ENCODE measurements at regions of chr10 and their contacts with region 1.

Region 1: DNA sequence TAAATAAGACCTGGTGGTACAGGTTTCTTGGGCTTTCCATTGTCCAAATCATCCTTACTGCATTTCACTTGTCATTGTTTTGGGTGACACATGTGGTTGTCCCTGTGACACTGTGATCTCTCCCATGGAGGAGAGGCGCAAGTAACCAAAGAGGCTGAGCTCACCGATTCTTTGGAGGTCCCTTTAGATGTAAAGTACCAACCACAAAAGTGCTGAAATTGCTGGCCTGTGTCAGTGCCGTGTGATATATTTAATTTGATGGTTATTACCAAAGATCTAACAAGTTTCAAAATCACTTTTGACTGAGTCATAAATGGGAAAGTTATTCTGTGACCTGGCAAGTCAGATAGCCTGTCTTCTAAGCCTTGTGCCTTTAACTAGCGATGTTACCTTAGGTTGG is 19.4 kb downstream of the MCM10 start:
- DNase-seq: no peak
- CTCF ChIP-seq: no peak

Region 2: GRCh38 chr10:13168781-13169180 is 12.0 kb before region 1 on chr10:
- CTCF ChIA-PET with region 1: interaction called, 10 read pairs
- POLR2A ChIA-PET with region 1: no interaction called
- DNase-seq: no peak
- CTCF ChIP-seq: no peak

Region 3: DNA sequence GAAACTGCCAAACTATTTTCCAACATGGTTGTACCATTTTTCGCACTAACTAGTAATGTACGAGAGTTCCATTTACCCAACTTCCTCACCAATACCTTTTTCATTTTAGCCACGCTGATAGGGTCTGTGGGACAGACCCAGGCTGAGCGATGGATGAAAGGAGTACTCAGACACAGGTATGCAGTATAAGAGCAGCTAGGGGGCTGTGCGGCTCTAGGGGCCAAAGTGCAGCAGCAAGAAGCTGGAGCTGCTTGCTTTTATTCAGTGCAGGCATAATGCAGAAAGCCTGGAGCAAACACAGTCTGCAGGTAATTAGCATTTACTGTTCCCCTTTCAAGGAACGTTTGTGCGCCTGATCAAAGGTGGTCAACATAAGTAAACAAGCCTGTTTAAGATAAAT is 32.4 kb after region 1 on chr10:
- CTCF ChIA-PET with region 1: no interaction called
- POLR2A ChIA-PET with region 1: no interaction called
- DNase-seq: no peak
- CTCF ChIP-seq: no peak

Region 4: DNA sequence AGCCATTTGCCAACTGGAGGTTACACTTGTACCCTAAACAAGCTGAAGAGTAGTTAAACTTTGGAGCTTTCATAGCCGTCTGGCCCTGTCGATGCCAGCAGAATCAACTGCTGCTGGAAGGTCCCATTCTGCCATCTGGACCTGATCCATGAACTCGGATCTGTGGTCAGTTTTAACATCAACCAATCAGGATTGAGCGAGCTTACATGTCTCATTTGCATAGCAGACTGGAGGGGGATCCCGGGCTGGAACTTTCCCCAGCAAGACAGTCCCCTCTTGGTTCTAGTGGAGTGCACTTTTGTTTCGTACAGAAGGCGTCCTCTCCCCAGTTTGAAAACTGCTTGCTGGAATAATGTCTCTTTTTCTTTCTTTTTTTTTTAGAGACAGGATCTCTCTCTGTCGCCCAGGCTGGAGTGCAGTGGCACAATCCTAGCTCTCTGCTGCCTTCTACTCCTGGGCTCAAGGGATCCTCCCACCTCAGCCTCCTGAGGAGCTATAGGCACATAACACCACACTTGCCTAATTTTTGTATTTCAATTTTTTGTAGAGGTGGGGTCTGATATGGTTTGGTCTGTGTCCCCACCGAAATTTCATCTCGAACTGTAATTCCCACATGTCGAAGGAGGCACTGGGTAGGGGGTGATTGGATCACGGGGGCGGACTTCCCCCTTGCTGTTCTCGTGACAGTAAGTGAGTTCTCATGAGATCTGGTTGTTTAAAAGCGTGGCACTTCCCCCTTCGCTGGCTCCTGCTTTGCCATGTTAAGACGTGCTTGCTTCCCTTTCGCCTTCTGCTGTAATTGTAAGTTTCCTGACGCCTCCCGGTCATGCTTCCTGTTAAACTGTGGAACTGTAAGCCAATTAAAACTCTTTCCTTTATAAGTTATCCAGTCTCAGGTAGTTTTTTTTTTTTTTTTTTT is 210.1 kb after region 1 on chr10:
- CTCF ChIA-PET with region 1: no interaction called
- POLR2A ChIA-PET with region 1: no interaction called
- DNase-seq: no peak
- CTCF ChIP-seq: no peak

Measured in GM10248 (cell line).